ENCODE measurements at regions of chr11 and their contacts with region 1.

Region 1: GRCh38 chr11:32435511-32435941 is at the start of gene WT1:
- DNase-seq: no peak
- H3K4me3 ChIP-seq: no peak within 1 kb of the TSS
- CTCF ChIP-seq: no peak

Region 2: DNA sequence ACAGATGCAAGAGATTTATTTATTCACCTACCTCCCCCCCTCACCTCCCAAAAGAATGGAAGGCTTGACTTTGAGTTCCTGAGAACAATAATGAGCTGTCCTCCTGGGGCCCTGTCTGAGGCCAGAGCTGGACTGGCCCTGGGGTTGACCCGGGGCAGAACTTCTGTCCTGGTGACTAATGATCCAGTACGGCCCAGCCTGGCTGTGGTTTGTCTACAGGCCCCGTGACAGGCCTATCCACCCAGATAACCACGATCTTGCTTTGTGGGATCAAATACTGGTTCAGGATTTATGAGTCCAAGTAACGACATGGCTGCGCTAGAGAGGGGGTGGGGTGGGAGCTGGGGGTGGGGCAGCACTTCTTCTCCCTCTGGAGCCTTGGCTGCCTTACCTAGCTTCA is 81.7 kb before region 1 on chr11:
- in situ Hi-C with region 1: no loop called
- DNase-seq: no peak
- H3K4me3 ChIP-seq: no peak overlapping the region
- CTCF ChIP-seq: no peak

Region 3: GRCh38 chr11:32494629-32495028 is 59.1 kb after region 1 on chr11:
- in situ Hi-C with region 1: loop called (anchors 5 kb)
- DNase-seq: no peak
- H3K4me3 ChIP-seq: no peak overlapping the region
- CTCF ChIP-seq: no peak

Region 4: DNA sequence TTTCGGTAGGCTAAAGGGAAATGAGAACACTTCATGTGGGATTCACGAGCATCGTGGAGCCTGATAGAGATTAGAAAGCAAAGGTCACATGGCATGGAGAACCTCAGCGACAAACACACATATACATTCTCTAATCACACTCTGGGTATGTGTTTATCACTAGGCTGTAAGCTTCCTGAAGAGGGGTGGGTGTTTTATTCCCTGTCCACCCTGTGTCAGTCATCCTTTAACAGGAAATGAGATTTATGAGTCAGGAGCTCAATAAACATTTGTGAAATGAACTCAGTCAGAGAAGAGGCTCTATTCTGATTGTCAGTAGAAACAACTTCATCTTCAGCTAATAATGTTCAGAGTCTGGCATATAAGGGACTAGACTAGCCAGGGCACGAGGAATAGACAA is 76.4 kb after region 1 on chr11:
- in situ Hi-C with region 1: no loop called
- DNase-seq: no peak
- H3K4me3 ChIP-seq: no peak overlapping the region
- CTCF ChIP-seq: no peak

Region 5: GRCh38 chr11:33065445-33066178 is 630.1 kb after region 1 on chr11:
- in situ Hi-C with region 1: loop called (anchors 10 kb)
- DNase-seq: peak; percentile 32
- H3K4me3 ChIP-seq: no peak overlapping the region
- CTCF ChIP-seq: peak; percentile 91